ENCODE measurements at regions of chr17 and their contacts with region 1.

Region 1: DNA sequence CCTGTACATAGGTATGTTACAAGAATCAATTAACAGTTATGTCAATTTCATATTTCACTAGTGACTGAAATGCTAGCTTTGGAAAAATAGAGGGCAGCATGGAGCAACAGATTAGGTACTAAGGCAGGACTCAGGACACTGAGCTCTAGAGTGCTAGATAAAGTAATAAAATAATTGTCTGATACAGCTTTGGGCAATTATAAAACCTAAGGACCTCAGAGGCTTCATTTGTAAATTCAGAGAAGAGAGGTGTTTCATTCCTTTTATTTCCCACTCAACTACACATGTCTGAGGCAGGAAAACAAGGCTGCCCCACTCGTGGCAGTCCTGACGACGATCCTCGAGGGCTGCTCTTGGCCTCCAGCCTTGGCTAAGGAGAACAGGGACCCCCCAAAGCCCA is 81.5 kb downstream of the CA4 start:
- DNase-seq: peak; percentile 20

Region 2: GRCh38 chr17:60135151-60135950 is 95.9 kb before region 1 on chr17:
- in situ Hi-C with region 1: loop called (anchors 25 kb)
- DNase-seq: peak; percentile 84

Measured in Caki2 (cell line).